ENCODE measurements at regions of chr11 and their contacts with region 1.

Region 1: DNA sequence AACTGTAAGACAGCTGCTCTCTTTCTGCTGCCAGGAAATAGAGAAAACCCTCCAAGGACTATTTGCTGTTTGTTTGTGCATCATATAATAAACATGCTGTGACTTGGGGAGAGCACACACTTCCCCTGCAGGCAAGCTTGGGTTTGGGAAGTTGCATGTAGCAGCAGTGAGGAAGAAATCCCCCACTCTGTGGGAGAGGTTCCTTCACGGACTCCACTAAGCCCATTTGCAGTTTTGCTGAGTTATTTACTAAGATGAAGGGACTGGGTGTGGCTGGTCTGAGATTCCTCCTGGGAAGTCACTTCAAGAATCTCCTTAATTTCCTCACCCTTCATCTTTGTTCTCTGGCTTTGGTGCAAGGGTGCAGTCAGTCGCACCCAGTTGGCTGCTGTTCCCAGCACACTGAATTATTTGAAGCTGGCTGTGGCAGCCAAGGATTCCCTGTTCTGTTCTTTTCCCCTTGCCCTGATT is 104.9 kb downstream of the ARFGAP2 start:
- DNase-seq: no peak
- ATAC-seq: no peak
- H3K4me3 ChIP-seq: no peak overlapping the region
- H3K27ac ChIP-seq: no peak overlapping the region
- H3K4me1 ChIP-seq: no peaks in the 10 kb centered on the region
- H3K27me3 ChIP-seq: no peaks in the 10 kb centered on the region
- CTCF ChIP-seq: no peak
- EP300 ChIP-seq: no peak
- POLR2A ChIP-seq: no peak
- RAD21 ChIP-seq: no peak

Region 2: GRCh38 chr11:46916286-46917108 is 155.3 kb before region 1 on chr11:
- CTCF ChIA-PET with region 1: interaction called, 3 read pairs
- POLR2A ChIA-PET with region 1: no interaction called
- RAD21 ChIA-PET with region 1: no interaction called
- SMC1A ChIA-PET with region 1: interaction called, 3 read pairs
- in situ Hi-C with region 1: no loop called
- intact Hi-C with region 1: loop called (anchors 5 kb)
- DNase-seq: no peak
- ATAC-seq: peak; percentile 32; the same call in 2 of the 3 replicates
- H3K4me3 ChIP-seq: peak overlapping the region; percentile 40; the same call in 1 of the 2 replicates
- H3K27ac ChIP-seq: no peak overlapping the region
- H3K4me1 ChIP-seq: peaks cover 6% of the 10 kb centered on the region; the same call in 1 of the 2 replicates
- H3K27me3 ChIP-seq: peaks cover 6 to 28% of the 10 kb centered on the region in 2 experiments
- CTCF ChIP-seq: 0 out of 6 replicates have a peak, but pooled peaks of 1 of the 3 experiments have one; percentile 1
- EP300 ChIP-seq: no peak
- POLR2A ChIP-seq: no peak
- RAD21 ChIP-seq: no peak

Region 3: GRCh38 chr11:47087801-47088200 is 16.0 kb after region 1 on chr11:
- CTCF ChIA-PET with region 1: interaction called, 3 read pairs
- POLR2A ChIA-PET with region 1: interaction called, 3 read pairs
- RAD21 ChIA-PET with region 1: no interaction called
- SMC1A ChIA-PET with region 1: interaction called, 13 read pairs
- in situ Hi-C with region 1: no loop called
- intact Hi-C with region 1: no loop called
- DNase-seq: no peak
- ATAC-seq: no peak
- H3K4me3 ChIP-seq: no peak overlapping the region
- H3K27ac ChIP-seq: no peak overlapping the region
- H3K4me1 ChIP-seq: no peaks in the 10 kb centered on the region
- H3K27me3 ChIP-seq: no peaks in the 10 kb centered on the region
- CTCF ChIP-seq: no peak
- EP300 ChIP-seq: no peak
- POLR2A ChIP-seq: no peak
- RAD21 ChIP-seq: no peak

Region 4: GRCh38 chr11:47259178-47259977 is 187.6 kb after region 1 on chr11:
- CTCF ChIA-PET with region 1: no interaction called
- POLR2A ChIA-PET with region 1: no interaction called
- RAD21 ChIA-PET with region 1: no interaction called
- SMC1A ChIA-PET with region 1: no interaction called
- in situ Hi-C with region 1: no loop called
- intact Hi-C with region 1: no loop called
- DNase-seq: no peak
- ATAC-seq: peak; percentile 94
- H3K4me3 ChIP-seq: no peak overlapping the region
- H3K27ac ChIP-seq: no peak overlapping the region
- H3K4me1 ChIP-seq: no peaks in the 10 kb centered on the region
- H3K27me3 ChIP-seq: no peaks in the 10 kb centered on the region
- CTCF ChIP-seq: peak; percentile 68 to 81 (median 76)
- EP300 ChIP-seq: no peak
- POLR2A ChIP-seq: no peak
- RAD21 ChIP-seq: peak; percentile 75

Measured in GM12878 (cell line).